ENCODE measurements at regions of chr3 and their contacts with region 1.

Region 1: GRCh38 chr3:140597792-140598191 is 80.1 kb upstream of the TRIM42 start:
- DNase-seq: no peak
- H3K4me3 ChIP-seq: no peak overlapping the region
- H3K27ac ChIP-seq: no peak overlapping the region
- H3K4me1 ChIP-seq: no peaks in the 10 kb centered on the region
- H3K27me3 ChIP-seq: no peaks in the 10 kb centered on the region
- CTCF ChIP-seq: no peak
- EP300 ChIP-seq: no peak
- POLR2A ChIP-seq: no peak

Region 2: DNA sequence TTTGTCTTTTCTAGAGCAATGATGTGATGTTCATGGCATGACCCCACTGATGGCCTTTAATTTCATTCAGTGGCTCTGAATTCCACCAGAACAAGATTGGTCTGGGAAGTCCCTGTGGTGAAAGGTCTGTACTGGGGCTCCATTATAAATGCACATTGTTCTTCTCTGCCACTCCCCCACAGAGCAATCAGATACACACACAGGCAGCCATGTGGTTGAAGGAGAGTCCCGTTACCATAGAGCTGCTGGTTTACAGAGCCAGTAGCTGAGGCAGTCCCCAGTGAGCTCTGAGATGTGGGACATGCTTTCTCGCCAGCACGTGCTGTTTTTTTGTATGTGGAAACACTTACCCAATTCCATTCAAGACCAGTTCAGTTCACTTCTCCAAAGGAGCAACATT is 92.6 kb before region 1 on chr3:
- intact Hi-C with region 1: no loop called
- DNase-seq: peak in 1 of 5 donors; percentile 31
- H3K4me3 ChIP-seq: no peak overlapping the region
- H3K27ac ChIP-seq: no peak overlapping the region
- H3K4me1 ChIP-seq: peaks cover 9% of the 10 kb centered on the region
- H3K27me3 ChIP-seq: no peaks in the 10 kb centered on the region
- CTCF ChIP-seq: no peak
- EP300 ChIP-seq: no peak
- POLR2A ChIP-seq: no peak

Region 3: GRCh38 chr3:140614001-140614400 is 16.2 kb after region 1 on chr3:
- intact Hi-C with region 1: loop called in 1 of 4 experiments (anchors 2 kb)
- DNase-seq: no peak
- H3K4me3 ChIP-seq: no peak overlapping the region
- H3K27ac ChIP-seq: no peak overlapping the region
- H3K4me1 ChIP-seq: peaks cover 2% of the 10 kb centered on the region
- H3K27me3 ChIP-seq: no peaks in the 10 kb centered on the region
- CTCF ChIP-seq: no peak
- EP300 ChIP-seq: no peak
- POLR2A ChIP-seq: no peak

Region 4: GRCh38 chr3:140995881-140996280 is 398.1 kb after region 1 on chr3:
- intact Hi-C with region 1: no loop called
- DNase-seq: no peak
- H3K4me3 ChIP-seq: no peak overlapping the region
- H3K27ac ChIP-seq: no peak overlapping the region
- H3K4me1 ChIP-seq: no peaks in the 10 kb centered on the region
- H3K27me3 ChIP-seq: no peaks in the 10 kb centered on the region
- CTCF ChIP-seq: no peak
- EP300 ChIP-seq: no peak
- POLR2A ChIP-seq: no peak